Activated naive CD8-positive, alpha-beta T cell treated with anti-CD3 and anti-CD28 coated beads, Interleukin-2, amount 10 ng/mL, durations not matched to agents 7 days and 5 days (primary cell): ENCODE measurements at regions of chr20 and their contacts with region 1.

Region 1: GRCh38 chr20:1674361-1674760 is 16.8 kb upstream of the SIRPG start:
- DNase-seq: peak; percentile 64
- ATAC-seq: peak; percentile 87
- H3K4me3 Mint-ChIP-seq: peak overlapping the region; percentile 84
- H3K27ac Mint-ChIP-seq: peak overlapping the region; percentile 97
- H3K4me1 Mint-ChIP-seq: peaks cover 84% of the 10 kb centered on the region
- H3K27me3 Mint-ChIP-seq: no peaks in the 10 kb centered on the region

Region 2: GRCh38 chr20:1657556-1658334 is 16.6 kb before region 1 on chr20 and contains the start of gene SIRPG:
- POLR2A ChIA-PET with region 1: interaction called, 36 read pairs
- DNase-seq: peak; percentile 61
- ATAC-seq: peak; percentile 79
- H3K4me3 Mint-ChIP-seq: peak within 1 kb of the TSS; percentile 91
- H3K27ac Mint-ChIP-seq: peak within 1 kb of the TSS; percentile 97
- H3K4me1 Mint-ChIP-seq: peaks cover 75% of the 10 kb centered on the region
- H3K27me3 Mint-ChIP-seq: no peaks in the 10 kb centered on the region
- total RNA-seq, gene SIRPG: 98.7 to 100 TPM

Region 3: DNA sequence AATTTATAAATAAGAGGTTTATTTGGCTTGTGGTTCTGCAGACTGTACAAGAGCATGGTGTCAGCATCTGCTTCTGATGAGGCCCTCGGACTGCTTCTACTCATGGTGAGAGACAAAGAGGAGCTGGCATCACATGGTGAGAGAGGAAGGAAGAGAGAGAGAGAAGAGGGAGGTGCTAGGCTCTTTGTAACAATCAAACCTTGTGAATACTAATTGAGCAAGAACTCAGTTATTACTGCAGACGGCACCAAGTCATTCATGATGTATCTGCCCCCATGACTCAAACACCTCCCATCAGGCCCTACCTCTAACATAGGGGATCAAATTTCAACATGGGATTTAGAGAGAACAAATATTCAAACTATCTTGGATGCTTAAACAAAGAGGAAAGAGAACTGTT is 10.4 kb before region 1 on chr20:
- POLR2A ChIA-PET with region 1: interaction called, 36 read pairs
- DNase-seq: no peak
- ATAC-seq: peak; percentile 21
- H3K4me3 Mint-ChIP-seq: peak overlapping the region; percentile 71
- H3K27ac Mint-ChIP-seq: peak overlapping the region; percentile 73
- H3K4me1 Mint-ChIP-seq: peaks cover 83% of the 10 kb centered on the region
- H3K27me3 Mint-ChIP-seq: no peaks in the 10 kb centered on the region

Region 4: GRCh38 chr20:1685304-1686052 is 11.1 kb after region 1 on chr20:
- POLR2A ChIA-PET with region 1: interaction called, 16 read pairs
- DNase-seq: no peak
- ATAC-seq: peak; percentile 75
- H3K4me3 Mint-ChIP-seq: peak overlapping the region; percentile 89
- H3K27ac Mint-ChIP-seq: peak overlapping the region; percentile 92
- H3K4me1 Mint-ChIP-seq: peaks cover 57% of the 10 kb centered on the region
- H3K27me3 Mint-ChIP-seq: no peaks in the 10 kb centered on the region

Region 5: GRCh38 chr20:1776681-1777475 is 102.5 kb after region 1 on chr20:
- POLR2A ChIA-PET with region 1: no interaction called
- DNase-seq: peak; percentile 85
- ATAC-seq: peak; percentile 84
- H3K4me3 Mint-ChIP-seq: peak overlapping the region; percentile 80
- H3K27ac Mint-ChIP-seq: no peak overlapping the region
- H3K4me1 Mint-ChIP-seq: peaks cover 2% of the 10 kb centered on the region
- H3K27me3 Mint-ChIP-seq: peaks cover 5% of the 10 kb centered on the region